WTC11 (cell line): ENCODE measurements at regions of chr9 and their contacts with region 1.

Region 1: GRCh38 chr9:37415011-37415719 is 7.3 kb upstream of the GRHPR start:
- DNase-seq: peak; percentile 75
- ATAC-seq: peak; percentile 70
- H3K4me3 Mint-ChIP-seq: peak overlapping the region; percentile 40
- H3K27ac Mint-ChIP-seq: peak overlapping the region; percentile 81
- H3K4me1 Mint-ChIP-seq: peaks cover 45% of the 10 kb centered on the region
- H3K27me3 Mint-ChIP-seq: peaks cover 2% of the 10 kb centered on the region; the same call in 1 of the 2 replicates
- CTCF ChIP-seq: peak; percentile 67

Region 2: GRCh38 chr9:36980148-36980974 is 434.8 kb before region 1 on chr9:
- CTCF ChIA-PET with region 1: interaction called, 17 read pairs
- POLR2A ChIA-PET with region 1: no interaction called
- DNase-seq: peak; percentile 75
- ATAC-seq: peak; percentile 97
- H3K4me3 Mint-ChIP-seq: no peak overlapping the region
- H3K27ac Mint-ChIP-seq: no peak overlapping the region
- H3K4me1 Mint-ChIP-seq: peaks cover 24% of the 10 kb centered on the region
- H3K27me3 Mint-ChIP-seq: peaks cover 43% of the 10 kb centered on the region
- CTCF ChIP-seq: no peak

Region 3: GRCh38 chr9:37144762-37145161 is 270.4 kb before region 1 on chr9:
- CTCF ChIA-PET with region 1: no interaction called
- POLR2A ChIA-PET with region 1: no interaction called
- DNase-seq: no peak
- ATAC-seq: peak; percentile 72
- H3K4me3 Mint-ChIP-seq: no peak overlapping the region
- H3K27ac Mint-ChIP-seq: peak overlapping the region; percentile 76
- H3K4me1 Mint-ChIP-seq: peaks cover 50% of the 10 kb centered on the region
- H3K27me3 Mint-ChIP-seq: no peaks in the 10 kb centered on the region
- CTCF ChIP-seq: no peak

Region 4: DNA sequence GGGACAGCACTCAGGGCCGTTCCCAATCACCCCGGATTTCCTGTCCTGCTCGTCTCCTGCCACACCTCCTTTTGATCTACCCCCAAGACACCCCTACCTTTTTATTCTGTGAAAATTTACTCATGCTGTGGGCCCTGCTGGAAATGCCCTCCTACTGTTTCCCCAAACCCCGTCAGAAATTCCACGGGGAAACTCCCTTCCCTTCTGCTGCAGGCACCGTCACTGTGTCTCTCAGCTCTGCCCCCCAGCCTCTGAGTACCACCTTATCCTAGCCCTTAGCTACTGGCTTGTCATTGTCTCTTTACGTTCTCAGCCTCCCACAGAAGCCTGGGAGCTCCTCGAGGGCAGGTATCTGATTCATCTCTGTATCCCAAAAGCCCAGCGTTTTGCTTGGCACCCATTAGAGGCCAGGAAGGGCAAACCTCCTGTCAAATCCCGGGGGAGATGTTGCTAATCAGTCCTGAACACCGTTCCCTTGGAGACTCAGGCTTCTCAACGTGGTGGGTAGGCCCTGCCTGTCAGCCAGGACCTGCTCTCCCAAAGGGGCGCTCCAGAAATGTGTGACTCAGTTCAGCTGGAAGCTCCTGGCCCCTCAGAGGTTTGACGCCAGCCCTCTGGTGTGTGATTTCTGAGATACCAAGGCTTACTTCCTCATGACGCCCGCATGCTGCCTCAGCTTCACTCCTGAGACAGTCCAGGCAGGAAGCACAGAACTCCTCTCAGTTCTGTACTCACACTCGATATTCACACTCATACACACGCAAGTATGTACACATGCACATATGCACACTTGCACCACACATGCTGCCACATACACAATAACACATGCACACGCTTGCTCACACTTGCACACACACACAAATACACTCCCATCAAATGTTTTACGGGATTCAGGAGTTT is 43.4 kb before region 1 on chr9:
- CTCF ChIA-PET with region 1: interaction called, 18 read pairs
- POLR2A ChIA-PET with region 1: no interaction called
- DNase-seq: no peak
- ATAC-seq: no peak; the same call in 1 of the 2 replicates
- H3K4me3 Mint-ChIP-seq: no peak overlapping the region
- H3K27ac Mint-ChIP-seq: no peak overlapping the region
- H3K4me1 Mint-ChIP-seq: peaks cover 4% of the 10 kb centered on the region
- H3K27me3 Mint-ChIP-seq: no peaks in the 10 kb centered on the region; the same call in 1 of the 2 replicates
- CTCF ChIP-seq: no peak

Region 5: DNA sequence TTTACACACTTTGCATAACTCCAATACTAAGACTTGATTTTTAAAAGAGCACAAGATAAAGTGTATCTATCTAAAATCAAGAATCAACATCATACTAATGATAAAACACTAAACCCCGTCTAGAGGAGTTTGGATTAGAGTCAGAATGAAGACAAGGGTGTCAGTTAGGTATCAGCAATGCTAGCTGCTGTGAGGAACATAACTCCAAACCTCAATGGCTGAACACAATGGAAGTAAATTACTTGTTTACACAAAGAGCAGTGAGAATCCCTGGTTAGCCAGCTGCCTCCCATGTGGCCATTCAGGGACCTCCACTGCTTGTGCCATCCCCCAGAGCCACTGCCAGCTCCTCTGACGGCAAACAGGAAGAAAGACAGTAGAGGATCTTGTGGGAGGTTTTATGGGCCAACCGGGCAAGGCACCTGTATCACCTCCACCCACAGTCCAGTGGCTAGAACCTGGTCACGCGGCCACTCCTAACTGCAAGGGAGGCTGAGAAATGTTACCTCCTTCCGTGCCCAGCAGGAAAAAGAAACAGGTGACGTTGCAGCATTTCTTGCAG is 16.6 kb before region 1 on chr9:
- CTCF ChIA-PET with region 1: interaction called, 29 read pairs
- POLR2A ChIA-PET with region 1: no interaction called
- DNase-seq: no peak
- ATAC-seq: no peak
- H3K4me3 Mint-ChIP-seq: no peak overlapping the region
- H3K27ac Mint-ChIP-seq: no peak overlapping the region
- H3K4me1 Mint-ChIP-seq: no peaks in the 10 kb centered on the region
- H3K27me3 Mint-ChIP-seq: no peaks in the 10 kb centered on the region
- CTCF ChIP-seq: no peak

Region 6: GRCh38 chr9:37449862-37450632 is 34.9 kb after region 1 on chr9:
- CTCF ChIA-PET with region 1: interaction called, 11 read pairs
- POLR2A ChIA-PET with region 1: no interaction called
- DNase-seq: no peak
- ATAC-seq: no peak
- H3K4me3 Mint-ChIP-seq: no peak overlapping the region
- H3K27ac Mint-ChIP-seq: peak overlapping the region; percentile 79
- H3K4me1 Mint-ChIP-seq: peaks cover 28% of the 10 kb centered on the region
- H3K27me3 Mint-ChIP-seq: no peaks in the 10 kb centered on the region
- CTCF ChIP-seq: no peak

Region 7: DNA sequence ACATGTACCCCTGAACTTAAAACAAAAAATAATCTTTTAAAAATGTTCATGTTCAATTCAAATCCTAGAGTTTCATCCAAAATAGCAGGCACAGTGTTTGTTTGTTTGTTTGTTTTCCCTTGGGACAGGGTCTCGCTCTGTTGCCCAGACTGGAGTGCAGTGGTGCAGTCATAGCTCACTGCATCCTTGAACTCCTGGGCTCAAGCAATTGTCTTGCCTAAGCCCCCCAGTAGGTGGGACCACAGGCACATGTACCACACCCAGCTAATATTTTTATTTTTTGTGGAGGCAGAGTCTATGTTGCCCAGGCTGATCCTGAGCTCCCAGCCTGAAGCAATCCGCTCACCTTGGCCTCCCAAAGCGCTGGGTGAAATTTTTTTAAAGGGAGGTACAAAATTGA is 65.6 kb after region 1 on chr9:
- CTCF ChIA-PET with region 1: interaction called, 10 read pairs
- POLR2A ChIA-PET with region 1: no interaction called
- DNase-seq: no peak
- ATAC-seq: no peak
- H3K4me3 Mint-ChIP-seq: no peak overlapping the region
- H3K27ac Mint-ChIP-seq: no peak overlapping the region
- H3K4me1 Mint-ChIP-seq: peaks cover 23% of the 10 kb centered on the region
- H3K27me3 Mint-ChIP-seq: peaks cover 7% of the 10 kb centered on the region; the same call in 1 of the 2 replicates
- CTCF ChIP-seq: no peak